Right ventricle myocardium superior (tissue), 1 donor: ENCODE measurements at regions of chr7 and their contacts with region 1.

Region 1: GRCh38 chr7:132495936-132496335 is 80.3 kb downstream of the PLXNA4 start:
- DNase-seq: no peak
- ATAC-seq: no peak

Region 2: DNA sequence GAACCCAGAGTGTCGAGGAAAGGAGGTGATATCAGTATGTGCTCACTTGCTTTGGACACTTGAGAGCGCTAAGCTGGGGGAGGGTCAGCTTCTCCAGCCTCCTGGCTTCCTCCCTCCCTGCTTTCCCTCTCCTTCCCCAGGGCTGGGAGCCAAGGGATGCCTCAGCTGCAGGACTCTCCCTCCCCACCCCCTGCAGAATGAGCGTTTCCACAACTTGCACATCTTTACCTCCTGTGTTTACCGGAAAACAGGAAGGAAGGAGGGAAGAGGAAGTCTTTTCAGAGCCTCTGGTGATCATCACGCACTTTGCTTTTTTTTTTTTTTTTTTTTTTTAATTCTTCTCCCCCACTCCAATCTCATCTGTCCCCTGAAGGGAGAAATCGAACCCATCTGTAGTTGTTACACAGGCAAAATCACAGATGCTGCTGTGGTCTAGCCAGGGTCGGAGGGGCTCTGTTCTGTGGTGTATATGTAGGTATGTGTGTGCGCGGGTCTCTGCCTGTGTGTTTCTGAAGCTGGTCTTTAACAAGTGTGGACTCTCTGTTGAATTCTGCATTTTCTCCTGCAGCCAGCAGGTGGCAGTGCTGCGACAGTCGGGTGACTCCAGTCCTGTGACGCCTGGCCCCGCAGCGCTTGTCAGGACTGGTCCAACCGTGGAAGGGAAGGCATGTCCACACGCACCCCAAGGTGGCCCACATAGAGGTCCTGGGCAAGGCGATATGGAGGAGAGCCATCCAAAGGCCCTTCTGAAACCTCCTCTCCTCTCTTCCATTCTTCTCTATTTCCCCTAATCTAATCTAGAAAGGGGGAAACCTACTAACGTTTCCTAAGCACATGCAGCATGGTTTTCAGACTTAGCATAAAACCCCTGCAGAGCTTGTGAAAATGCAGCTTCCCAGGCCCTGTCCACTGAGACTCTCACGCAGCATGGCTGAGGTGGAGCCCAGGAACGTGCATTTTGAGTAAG is 177.3 kb before region 1 on chr7:
- intact Hi-C with region 1: loop called (anchors 5 kb)
- DNase-seq: peak; percentile 88
- ATAC-seq: peak; percentile 96

Region 3: GRCh38 chr7:132557489-132558044 is 61.6 kb after region 1 on chr7:
- intact Hi-C with region 1: no loop called
- DNase-seq: no peak
- ATAC-seq: no peak

Region 4: GRCh38 chr7:132614428-132615318 is 118.7 kb after region 1 on chr7:
- intact Hi-C with region 1: no loop called
- DNase-seq: peak; percentile 73
- ATAC-seq: peak; percentile 77

Region 5: DNA sequence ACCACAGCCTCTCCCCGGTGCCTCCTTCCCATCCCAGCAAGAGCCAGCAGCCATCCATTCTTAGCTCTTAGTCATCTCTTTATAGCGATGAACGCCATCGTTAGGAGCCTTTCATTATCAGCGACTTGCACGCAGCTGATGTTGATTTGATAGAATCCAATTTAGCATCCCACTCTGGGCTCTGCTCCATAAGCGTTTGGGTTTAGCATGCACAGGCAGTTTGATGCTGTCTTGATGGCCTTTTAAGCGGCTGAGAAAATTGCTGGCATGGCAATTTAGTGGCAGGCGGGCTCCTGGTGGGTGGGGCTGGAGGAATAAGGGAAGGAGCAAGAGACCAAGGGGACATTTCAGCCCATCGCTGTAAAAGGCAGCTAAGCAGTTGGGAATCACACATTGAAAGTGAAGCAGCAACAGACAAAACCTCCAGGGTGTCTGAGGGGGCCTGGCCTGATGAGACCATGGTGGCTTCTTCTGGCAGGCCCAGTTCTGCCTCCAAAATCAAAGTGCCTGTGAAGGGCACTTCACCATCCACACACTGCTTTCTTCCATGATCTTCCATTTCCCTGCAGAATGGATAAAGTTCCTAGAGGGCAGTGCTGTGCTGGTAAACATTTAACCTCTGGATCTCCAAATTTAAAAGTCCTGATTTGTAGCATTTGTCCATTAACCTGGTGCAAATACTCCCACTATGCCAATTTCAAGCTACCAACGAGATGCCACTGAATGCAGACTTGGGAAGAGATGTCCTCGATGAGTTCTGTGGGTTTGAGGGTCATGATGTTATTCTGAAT is 188.2 kb after region 1 on chr7:
- intact Hi-C with region 1: no loop called
- DNase-seq: no peak
- ATAC-seq: no peak

Region 6: DNA sequence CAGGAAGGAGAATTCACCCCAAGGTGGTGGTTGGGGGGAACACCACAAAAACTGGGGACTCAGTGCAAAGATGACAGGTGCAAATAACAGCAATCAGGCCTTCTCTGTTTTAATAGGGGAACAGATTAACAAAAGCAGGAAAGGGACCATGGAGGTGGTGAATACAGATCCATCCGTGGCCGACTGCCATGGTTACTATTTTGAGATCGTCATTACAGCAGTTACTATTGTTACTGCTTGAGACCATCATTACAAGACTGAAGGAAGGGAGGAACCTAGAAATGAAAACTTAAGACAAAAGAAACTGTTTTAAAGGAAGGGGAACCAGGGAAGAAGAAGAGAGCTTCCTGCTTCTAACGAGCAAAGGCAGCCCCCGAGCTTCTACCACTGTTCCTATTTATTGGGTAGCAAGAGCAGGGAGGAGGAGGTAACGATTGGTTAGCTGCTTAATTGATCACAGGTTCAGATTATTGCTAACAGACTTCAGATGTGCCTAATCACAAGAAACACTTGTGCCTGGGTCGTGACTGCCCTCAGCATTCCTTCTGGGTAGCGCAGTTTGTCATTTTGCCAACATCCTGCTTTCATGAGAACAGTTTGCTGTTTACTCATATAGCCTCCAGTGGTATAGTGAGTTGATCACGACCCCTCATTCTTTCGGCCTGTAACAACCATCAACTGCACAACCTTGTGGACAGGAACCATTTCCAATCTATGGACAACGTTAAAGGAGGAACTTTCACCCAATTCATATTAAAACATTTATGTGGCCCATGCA is 369.6 kb after region 1 on chr7:
- intact Hi-C with region 1: no loop called
- DNase-seq: no peak
- ATAC-seq: peak; percentile 68